ENCODE measurements at regions of chr3 and their contacts with region 1.

Region 1: GRCh38 chr3:71725279-71725991 is at the start of gene EIF4E3:
- DNase-seq: peak; percentile 40
- H3K4me3 Mint-ChIP-seq: peak within 1 kb of the TSS; percentile 98
- H3K27ac Mint-ChIP-seq: peak within 1 kb of the TSS; percentile 96
- H3K4me1 Mint-ChIP-seq: peaks cover 66% of the 10 kb centered on the region
- H3K27me3 Mint-ChIP-seq: no peaks in the 10 kb centered on the region
- total RNA-seq, gene EIF4E3: 36.7 to 37.6 TPM

Region 2: DNA sequence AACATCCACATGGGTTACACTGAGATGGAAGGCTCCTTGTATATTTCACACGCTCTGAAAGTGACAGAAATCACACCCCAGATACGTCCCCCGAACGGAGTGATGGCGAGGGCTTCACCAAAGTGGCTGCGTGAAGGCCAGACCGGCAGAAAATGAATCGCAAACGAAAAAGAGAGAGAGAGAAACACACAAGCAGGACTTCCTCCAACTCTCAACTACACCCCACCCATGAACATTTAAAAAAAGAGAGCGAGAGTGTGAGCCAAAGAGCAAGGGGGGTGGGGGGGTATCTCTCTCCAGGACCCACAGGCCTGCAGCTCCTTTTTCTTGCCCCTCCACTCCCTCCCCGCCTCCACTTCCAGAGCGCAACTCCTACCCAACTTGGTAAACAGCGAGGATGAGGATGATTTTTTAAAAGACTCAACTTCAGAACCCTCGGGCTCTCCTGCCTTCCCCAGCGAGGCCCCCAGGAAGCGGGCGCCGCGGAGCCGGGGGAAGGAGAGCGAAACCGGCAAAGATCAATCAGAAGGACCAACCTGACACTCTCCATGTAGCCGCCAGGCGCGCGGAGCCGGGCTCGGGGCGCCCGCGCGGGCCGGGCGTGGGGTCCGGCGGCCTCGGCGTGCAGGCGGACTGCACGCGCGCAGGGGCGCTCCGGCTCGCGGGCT is 661.0 kb before region 1 on chr3:
- CTCF ChIA-PET with region 1: no interaction called
- POLR2A ChIA-PET with region 1: no interaction called
- intact Hi-C with region 1: loop called (anchors 5 kb)
- DNase-seq: peak; percentile 78
- H3K4me3 Mint-ChIP-seq: no peak overlapping the region
- H3K27ac Mint-ChIP-seq: no peak overlapping the region
- H3K4me1 Mint-ChIP-seq: peaks cover 63% of the 10 kb centered on the region
- H3K27me3 Mint-ChIP-seq: no peaks in the 10 kb centered on the region

Region 3: GRCh38 chr3:71512000-71512399 is 213.4 kb before region 1 on chr3:
- CTCF ChIA-PET with region 1: no interaction called
- POLR2A ChIA-PET with region 1: no interaction called
- intact Hi-C with region 1: no loop called
- DNase-seq: peak; percentile 46
- H3K4me3 Mint-ChIP-seq: no peak overlapping the region
- H3K27ac Mint-ChIP-seq: no peak overlapping the region
- H3K4me1 Mint-ChIP-seq: peaks cover 6% of the 10 kb centered on the region
- H3K27me3 Mint-ChIP-seq: no peaks in the 10 kb centered on the region

Region 4: GRCh38 chr3:71702131-71703024 is 23.1 kb before region 1 on chr3:
- CTCF ChIA-PET with region 1: interaction called, 5 read pairs
- POLR2A ChIA-PET with region 1: interaction called, 3 read pairs
- intact Hi-C with region 1: loop called (anchors 1 kb)
- DNase-seq: peak; percentile 54
- H3K4me3 Mint-ChIP-seq: peak overlapping the region; percentile 66
- H3K27ac Mint-ChIP-seq: peak overlapping the region; percentile 95
- H3K4me1 Mint-ChIP-seq: peaks cover 58% of the 10 kb centered on the region
- H3K27me3 Mint-ChIP-seq: no peaks in the 10 kb centered on the region

Region 5: DNA sequence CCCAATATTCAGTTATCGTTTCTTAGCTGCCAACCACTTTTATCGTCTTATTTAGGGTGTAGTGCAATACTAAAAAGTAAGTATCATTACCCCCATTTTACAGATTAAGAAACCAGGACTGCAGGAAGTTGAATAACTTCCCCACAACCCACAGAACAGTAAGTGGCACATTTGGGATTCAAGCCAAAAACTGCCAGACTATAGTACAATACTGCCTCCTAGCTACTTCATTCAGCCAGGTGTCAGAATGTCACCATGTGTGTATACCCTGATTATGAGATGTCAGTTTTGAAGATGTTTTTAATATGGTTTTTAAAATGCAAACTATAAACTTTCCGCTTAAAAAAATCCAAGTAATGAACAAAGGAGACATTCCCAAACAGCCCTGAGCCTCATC is 133.7 kb after region 1 on chr3:
- CTCF ChIA-PET with region 1: interaction called, 87 read pairs
- POLR2A ChIA-PET with region 1: no interaction called
- intact Hi-C with region 1: loop called (anchors 1 kb)
- DNase-seq: no peak
- H3K4me3 Mint-ChIP-seq: no peak overlapping the region
- H3K27ac Mint-ChIP-seq: no peak overlapping the region
- H3K4me1 Mint-ChIP-seq: peaks cover 15% of the 10 kb centered on the region
- H3K27me3 Mint-ChIP-seq: peaks cover 27% of the 10 kb centered on the region

Region 6: DNA sequence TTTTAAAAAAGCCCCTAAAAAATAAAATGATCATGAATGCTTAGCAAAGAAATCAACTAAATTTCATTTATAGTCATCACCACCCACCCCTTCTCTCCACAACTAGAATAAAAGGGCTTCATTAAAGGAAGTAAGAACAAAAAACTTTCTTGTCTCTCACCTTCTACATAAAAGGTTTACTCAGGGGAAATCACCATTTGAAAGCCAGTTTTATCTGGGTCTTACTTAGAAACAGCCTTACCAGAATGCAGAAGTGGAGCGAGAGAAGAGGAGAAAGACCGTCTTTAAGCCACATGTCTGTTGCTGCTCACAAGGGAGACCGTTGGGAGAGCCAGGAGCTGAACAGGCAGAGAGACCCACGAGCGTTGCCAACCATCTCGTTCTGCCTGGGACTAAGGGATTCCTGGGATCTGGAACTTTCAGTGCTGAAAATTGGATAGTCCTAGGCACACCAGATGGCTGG is 409.6 kb after region 1 on chr3:
- CTCF ChIA-PET with region 1: interaction called, 3 read pairs
- POLR2A ChIA-PET with region 1: no interaction called
- intact Hi-C with region 1: loop called (anchors 2 kb)
- DNase-seq: peak; percentile 25
- H3K4me3 Mint-ChIP-seq: peak overlapping the region; percentile 59
- H3K27ac Mint-ChIP-seq: peak overlapping the region; percentile 85
- H3K4me1 Mint-ChIP-seq: peaks cover 47% of the 10 kb centered on the region
- H3K27me3 Mint-ChIP-seq: no peaks in the 10 kb centered on the region

Region 7: GRCh38 chr3:72818092-72818773 is 1092.8 kb after region 1 on chr3:
- CTCF ChIA-PET with region 1: interaction called, 8 read pairs
- POLR2A ChIA-PET with region 1: no interaction called
- intact Hi-C with region 1: loop called (anchors 5 kb)
- DNase-seq: no peak
- H3K4me3 Mint-ChIP-seq: no peak overlapping the region
- H3K27ac Mint-ChIP-seq: no peak overlapping the region
- H3K4me1 Mint-ChIP-seq: peaks cover 22% of the 10 kb centered on the region
- H3K27me3 Mint-ChIP-seq: no peaks in the 10 kb centered on the region

Measured in activated CD4-positive, alpha-beta memory T cell treated with anti-CD3 and anti-CD28 coated beads for 36 hours (primary cell).